ENCODE measurements at regions of chr18 and their contacts with region 1.

Region 1: DNA sequence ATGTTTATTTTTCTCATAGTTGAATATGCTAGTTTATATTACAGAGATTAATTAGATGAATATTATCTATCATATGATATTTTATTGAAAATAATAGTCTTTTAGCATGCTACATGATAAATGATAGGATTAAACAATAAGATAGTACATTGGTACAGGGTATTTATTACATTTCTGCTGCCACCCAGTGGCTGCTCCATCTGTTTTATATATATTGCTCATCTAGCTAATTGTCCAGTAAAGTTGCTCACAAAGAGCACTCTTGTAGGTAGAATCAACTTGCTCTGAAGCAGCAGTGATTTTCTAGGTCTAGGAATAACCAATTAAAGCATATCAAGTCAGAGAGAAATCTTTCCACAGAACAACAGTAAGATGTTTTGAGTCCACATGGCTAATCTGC is 183.3 kb downstream of the ASXL3 start:
- DNase-seq: peak; percentile 14
- H3K4me3 Mint-ChIP-seq: no peak overlapping the region
- H3K27ac Mint-ChIP-seq: no peak overlapping the region
- H3K4me1 Mint-ChIP-seq: no peaks in the 10 kb centered on the region
- H3K27me3 Mint-ChIP-seq: no peaks in the 10 kb centered on the region
- CTCF ChIP-seq: no peak

Region 2: DNA sequence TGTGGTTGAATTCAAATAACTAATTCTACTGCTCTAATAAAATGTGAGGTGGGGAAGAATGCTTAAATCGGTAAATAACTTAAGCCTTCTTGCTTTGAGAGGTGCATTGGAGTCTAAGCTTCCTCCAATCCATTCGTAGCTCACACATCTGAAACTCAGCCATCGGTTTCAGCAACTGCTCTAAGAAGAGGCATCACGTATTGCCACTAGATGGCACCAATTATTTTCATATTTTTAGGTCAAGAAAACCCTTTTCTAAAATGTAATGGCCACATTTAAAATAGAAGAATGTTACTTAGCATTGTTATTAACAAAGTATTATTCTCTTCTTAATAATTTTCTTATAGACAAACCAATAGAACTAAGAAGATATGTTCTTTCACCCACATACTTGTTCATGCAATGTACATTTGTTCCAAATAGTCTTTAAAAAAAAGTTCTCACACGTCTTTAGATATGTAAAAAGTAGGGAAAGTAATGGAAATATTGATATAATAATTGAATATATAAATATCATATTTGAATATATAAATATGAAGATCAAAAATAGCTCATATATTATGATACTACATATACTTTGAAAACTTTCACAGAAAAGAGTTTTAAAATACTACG is 550.7 kb before region 1 on chr18:
- CTCF ChIA-PET with region 1: interaction called, 3 read pairs
- intact Hi-C with region 1: loop called (anchors 5 kb)
- DNase-seq: peak; percentile 13
- H3K4me3 Mint-ChIP-seq: no peak overlapping the region
- H3K27ac Mint-ChIP-seq: no peak overlapping the region
- H3K4me1 Mint-ChIP-seq: no peaks in the 10 kb centered on the region
- H3K27me3 Mint-ChIP-seq: no peaks in the 10 kb centered on the region
- CTCF ChIP-seq: peak; percentile 42

Region 3: GRCh38 chr18:33231474-33232317 is 529.7 kb before region 1 on chr18:
- CTCF ChIA-PET with region 1: interaction called, 6 read pairs
- intact Hi-C with region 1: loop called (anchors 2 kb)
- DNase-seq: peak; percentile 77
- H3K4me3 Mint-ChIP-seq: no peak overlapping the region
- H3K27ac Mint-ChIP-seq: no peak overlapping the region
- H3K4me1 Mint-ChIP-seq: peaks cover 8% of the 10 kb centered on the region
- H3K27me3 Mint-ChIP-seq: no peaks in the 10 kb centered on the region
- CTCF ChIP-seq: peak; percentile 92

Region 4: GRCh38 chr18:33630476-33630875 is 130.9 kb before region 1 on chr18:
- CTCF ChIA-PET with region 1: no interaction called
- intact Hi-C with region 1: no loop called
- DNase-seq: no peak
- H3K4me3 Mint-ChIP-seq: no peak overlapping the region
- H3K27ac Mint-ChIP-seq: no peak overlapping the region
- H3K4me1 Mint-ChIP-seq: no peaks in the 10 kb centered on the region
- H3K27me3 Mint-ChIP-seq: no peaks in the 10 kb centered on the region
- CTCF ChIP-seq: no peak